Heart left ventricle (tissue), 16 donors: ENCODE measurements at regions of chr9 and their contacts with region 1.

Region 1: DNA sequence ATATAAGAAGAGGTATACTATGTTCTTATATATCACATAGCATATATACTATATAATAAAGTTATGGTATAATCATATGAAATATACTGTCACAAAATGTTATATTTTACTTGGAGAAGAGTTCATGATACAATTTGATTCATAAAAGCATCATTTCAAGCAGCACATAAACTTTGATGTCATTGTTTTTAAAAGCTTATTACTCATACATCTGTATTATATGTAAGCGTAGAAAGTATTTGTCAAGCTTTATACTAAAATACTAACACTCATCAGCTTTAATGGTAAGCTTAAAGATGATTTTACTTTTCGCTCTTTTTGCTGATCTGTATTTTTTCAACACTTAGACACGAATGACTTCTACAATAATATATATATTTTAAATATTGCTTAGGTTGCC is 34.0 kb upstream of the ZNF618 start:
- DNase-seq: no peak
- ATAC-seq: no peak
- H3K4me3 ChIP-seq: no peak overlapping the region
- H3K27ac ChIP-seq: no peak overlapping the region
- H3K4me1 ChIP-seq: no peaks in the 10 kb centered on the region
- H3K27me3 ChIP-seq: no peaks in the 10 kb centered on the region
- CTCF ChIP-seq: no peak
- POLR2A ChIP-seq: no peak

Region 2: GRCh38 chr9:113817171-113817570 is 24.9 kb before region 1 on chr9:
- intact Hi-C with region 1: no loop called
- DNase-seq: no peak
- ATAC-seq: no peak
- H3K4me3 ChIP-seq: no peak overlapping the region
- H3K27ac ChIP-seq: no peak overlapping the region
- H3K4me1 ChIP-seq: no peaks in the 10 kb centered on the region
- H3K27me3 ChIP-seq: peaks cover 0 to 8% (median 3%) of the 10 kb centered on the region in 9 donors
- CTCF ChIP-seq: no peak
- POLR2A ChIP-seq: no peak

Region 3: DNA sequence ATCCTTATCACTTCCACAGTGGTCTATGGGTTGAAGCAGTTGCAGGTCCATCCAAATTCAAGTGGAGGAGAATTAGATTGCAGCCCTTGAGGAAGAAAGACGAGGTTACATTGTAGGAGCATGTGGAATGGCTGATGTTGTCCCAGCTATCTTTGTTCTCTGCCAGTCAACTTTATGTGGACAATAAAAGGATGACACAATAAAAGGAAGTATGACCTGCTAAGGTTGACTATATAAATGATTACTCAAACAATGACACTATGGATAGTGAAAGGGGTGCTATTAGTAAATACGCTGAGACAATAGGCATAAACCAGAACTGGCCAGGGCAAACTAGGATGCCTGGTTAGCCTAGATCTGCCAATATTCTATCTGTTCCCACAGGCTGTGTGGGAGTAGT is 21.3 kb after region 1 on chr9:
- intact Hi-C with region 1: loop called in 1 of 10 experiments (anchors 2 kb)
- DNase-seq: no peak
- ATAC-seq: no peak
- H3K4me3 ChIP-seq: no peak overlapping the region
- H3K27ac ChIP-seq: no peak overlapping the region
- H3K4me1 ChIP-seq: no peaks in the 10 kb centered on the region
- H3K27me3 ChIP-seq: peaks cover 0 to 18% (median 0%) of the 10 kb centered on the region in 9 donors
- CTCF ChIP-seq: no peak
- POLR2A ChIP-seq: no peak

Region 4: DNA sequence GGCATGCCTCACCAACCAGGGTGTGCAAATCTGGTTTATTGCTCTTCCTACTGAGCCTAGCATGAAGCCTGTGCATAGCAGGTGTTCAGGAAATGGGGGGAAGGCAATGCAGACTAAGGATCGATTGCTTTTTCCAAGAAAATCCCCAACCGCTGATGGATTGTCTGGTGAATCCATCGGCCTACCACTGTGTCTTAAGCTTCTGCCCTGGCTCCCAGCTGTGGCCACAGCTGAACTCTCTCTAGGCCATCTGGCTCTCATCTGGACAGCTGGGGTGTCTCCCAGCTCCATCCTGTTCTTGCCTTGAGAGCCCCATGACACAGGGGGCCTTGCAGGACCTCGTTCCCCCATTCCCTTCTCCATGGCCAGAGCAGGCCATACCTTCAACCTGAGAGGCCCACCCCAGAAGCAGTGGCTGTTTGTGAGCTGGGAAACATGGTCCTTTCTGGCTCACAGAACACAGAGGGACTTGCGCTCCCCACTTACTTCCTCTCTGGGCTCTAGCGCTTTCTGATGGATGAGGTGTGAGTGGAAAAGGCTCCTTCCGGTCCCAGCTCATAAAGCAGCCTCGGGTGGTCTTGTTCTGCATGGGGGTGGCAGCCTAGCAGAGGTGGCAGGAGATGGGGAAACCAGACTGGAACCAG is 355.0 kb after region 1 on chr9:
- intact Hi-C with region 1: no loop called
- DNase-seq: no peak
- ATAC-seq: no peak
- H3K4me3 ChIP-seq: no peak overlapping the region
- H3K27ac ChIP-seq: no peak overlapping the region
- H3K4me1 ChIP-seq: no peaks in the 10 kb centered on the region
- H3K27me3 ChIP-seq: no peaks in the 10 kb centered on the region
- CTCF ChIP-seq: no peak
- POLR2A ChIP-seq: no peak